IMR-90 (cell line): ENCODE measurements at regions of chr14 and their contacts with region 1.

Region 1: DNA sequence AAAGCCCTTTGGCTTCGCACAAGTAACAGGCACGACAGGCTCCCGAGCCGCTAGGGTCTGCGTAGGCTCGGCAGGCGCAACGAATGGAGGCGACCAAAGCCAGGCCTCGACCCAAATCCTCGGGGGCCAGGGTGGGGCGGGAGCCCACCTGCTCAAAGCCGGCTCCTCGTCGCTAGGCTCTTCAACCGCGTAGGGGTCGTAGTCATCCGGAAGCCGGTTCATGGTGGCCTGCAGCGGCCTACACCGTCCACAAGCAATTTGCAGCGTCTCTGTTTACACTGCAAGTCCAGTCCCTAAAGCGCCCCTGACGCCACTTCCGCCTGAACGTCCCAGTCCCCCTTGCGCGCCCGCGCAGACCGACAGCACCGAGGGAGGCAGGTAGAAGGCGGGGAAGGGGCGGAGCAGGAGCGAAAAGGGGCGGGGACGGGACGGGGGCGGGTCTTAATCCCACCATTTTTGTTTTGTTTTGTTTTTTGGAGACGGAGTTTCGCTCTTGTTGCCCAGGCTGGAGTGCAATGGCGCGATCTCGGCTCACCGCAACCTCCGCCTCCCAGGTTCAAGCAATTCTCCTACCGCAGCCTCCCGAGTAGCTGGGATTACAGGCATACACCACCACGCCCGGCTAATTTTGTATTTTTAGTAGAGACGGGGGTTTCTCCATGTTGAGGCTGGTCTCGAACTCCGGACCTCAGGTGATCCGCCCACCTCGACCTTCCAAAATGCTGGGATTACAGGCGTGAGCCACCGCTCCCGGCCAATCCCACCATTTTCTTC is at the start of gene EAPP:
- DNase-seq: peak; percentile 97
- ATAC-seq: peak; percentile 99
- H3K4me3 ChIP-seq: peak within 1 kb of the TSS; percentile 80
- H3K27ac ChIP-seq: peak within 1 kb of the TSS; percentile 94
- H3K4me1 ChIP-seq: peaks cover 5% of the 10 kb centered on the region
- H3K27me3 ChIP-seq: no peaks in the 10 kb centered on the region
- CTCF ChIP-seq: no peak
- POLR2A ChIP-seq: peak; percentile 94
- RAD21 ChIP-seq: peak; percentile 35
- total RNA-seq, gene EAPP: 32.3 and 53.6 TPM in 2 replicates

Region 2: GRCh38 chr14:34365309-34365915 is 174.2 kb before region 1 on chr14:
- CTCF ChIA-PET with region 1: no interaction called
- POLR2A ChIA-PET with region 1: no interaction called
- dilution Hi-C with region 1: no loop called
- in situ Hi-C with region 1: no loop called
- intact Hi-C with region 1: loop called (anchors 5 kb)
- DNase-seq: peak; percentile 13
- ATAC-seq: 0 out of 2 replicates have a peak, but pooled peaks have one; percentile 53
- H3K4me3 ChIP-seq: no peak overlapping the region
- H3K27ac ChIP-seq: no peak overlapping the region
- H3K4me1 ChIP-seq: peaks cover 9% of the 10 kb centered on the region; the same call in 1 of the 2 replicates
- H3K27me3 ChIP-seq: no peaks in the 10 kb centered on the region
- CTCF ChIP-seq: 0 out of 2 replicates have a peak, but pooled peaks have one; percentile 26
- POLR2A ChIP-seq: no peak
- RAD21 ChIP-seq: peak; percentile 23; the same call in 1 of the 2 replicates

Region 3: DNA sequence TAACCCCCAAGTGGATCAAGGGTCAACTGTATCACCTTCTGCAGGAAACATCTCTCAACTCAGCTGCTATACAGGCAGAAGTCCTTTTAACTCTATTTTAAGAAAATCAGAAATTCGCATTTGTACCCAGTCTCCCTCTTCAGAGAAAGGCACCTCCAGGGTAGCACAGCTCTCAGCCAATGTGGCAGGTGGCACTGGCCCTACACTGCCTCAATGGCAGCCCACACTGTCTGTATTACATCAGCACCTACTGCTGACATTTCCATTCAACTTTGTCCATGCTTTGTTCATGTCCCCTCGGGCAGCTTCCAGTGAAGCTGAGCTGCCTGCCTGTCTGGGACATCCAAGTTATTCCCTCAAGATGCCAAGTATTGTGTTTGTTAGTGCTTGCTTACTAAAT is 86.4 kb before region 1 on chr14:
- CTCF ChIA-PET with region 1: no interaction called
- POLR2A ChIA-PET with region 1: no interaction called
- dilution Hi-C with region 1: no loop called
- in situ Hi-C with region 1: loop called (anchors 10 kb)
- intact Hi-C with region 1: no loop called
- DNase-seq: no peak
- ATAC-seq: no peak
- H3K4me3 ChIP-seq: no peak overlapping the region
- H3K27ac ChIP-seq: no peak overlapping the region
- H3K4me1 ChIP-seq: peaks cover 2% of the 10 kb centered on the region; the same call in 1 of the 2 replicates
- H3K27me3 ChIP-seq: no peaks in the 10 kb centered on the region
- CTCF ChIP-seq: no peak
- POLR2A ChIP-seq: no peak
- RAD21 ChIP-seq: no peak

Region 4: DNA sequence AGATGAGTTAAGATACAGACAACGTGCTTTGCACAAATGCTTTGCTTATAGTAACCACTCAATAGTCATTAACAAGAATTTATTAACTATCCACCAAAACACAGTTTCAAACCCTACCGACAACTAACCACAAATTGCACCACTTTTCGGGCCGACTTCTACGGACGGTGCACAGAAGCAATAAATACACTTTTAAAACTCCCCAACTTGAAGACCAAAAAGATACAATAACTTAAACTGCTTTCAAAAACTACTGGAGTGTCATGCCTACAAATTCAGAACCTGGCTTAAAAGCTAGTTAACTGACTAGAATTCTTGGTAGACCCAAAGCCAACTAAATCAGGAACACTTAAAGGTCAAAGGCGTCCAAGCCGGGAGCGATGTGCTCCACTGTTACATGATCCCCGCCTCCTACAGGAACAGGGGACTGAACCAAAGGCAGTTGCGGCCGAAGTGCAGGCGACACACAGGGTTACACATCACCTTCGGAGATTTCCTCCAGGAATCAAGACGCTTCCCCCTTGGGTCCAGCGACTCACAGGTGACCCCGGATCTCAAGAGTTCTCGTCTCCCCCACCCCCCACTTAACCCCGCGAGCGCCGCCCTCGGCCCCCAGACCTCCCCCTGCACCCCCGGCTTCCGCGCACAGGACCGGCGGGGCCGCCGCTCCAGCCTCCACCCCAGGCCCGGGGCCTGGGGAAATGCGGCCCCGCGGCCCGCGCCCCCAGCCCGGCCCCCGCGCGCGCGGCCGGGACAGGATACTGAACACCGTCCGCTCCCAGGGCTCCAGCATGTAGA is 78.1 kb before region 1 on chr14:
- CTCF ChIA-PET with region 1: no interaction called
- POLR2A ChIA-PET with region 1: no interaction called
- dilution Hi-C with region 1: no loop called
- in situ Hi-C with region 1: loop called (anchors 10 kb)
- intact Hi-C with region 1: loop called (anchors 5 kb)
- DNase-seq: peak; percentile 52
- ATAC-seq: peak; percentile 36
- H3K4me3 ChIP-seq: peak overlapping the region; percentile 82
- H3K27ac ChIP-seq: peak overlapping the region; percentile 80
- H3K4me1 ChIP-seq: peaks cover 6% of the 10 kb centered on the region
- H3K27me3 ChIP-seq: no peaks in the 10 kb centered on the region
- CTCF ChIP-seq: no peak
- POLR2A ChIP-seq: no peak
- RAD21 ChIP-seq: no peak

Region 5: GRCh38 chr14:34496679-34497513 is 42.7 kb before region 1 on chr14:
- CTCF ChIA-PET with region 1: interaction called, 3 read pairs
- POLR2A ChIA-PET with region 1: no interaction called
- dilution Hi-C with region 1: no loop called
- in situ Hi-C with region 1: no loop called
- intact Hi-C with region 1: loop called (anchors 5 kb)
- DNase-seq: peak; percentile 100
- ATAC-seq: peak; percentile 96
- H3K4me3 ChIP-seq: no peak overlapping the region
- H3K27ac ChIP-seq: peak overlapping the region; percentile 98
- H3K4me1 ChIP-seq: peaks cover 12% of the 10 kb centered on the region
- H3K27me3 ChIP-seq: no peaks in the 10 kb centered on the region
- CTCF ChIP-seq: peak; percentile 38
- POLR2A ChIP-seq: peak; percentile 91
- RAD21 ChIP-seq: peak; percentile 49

Region 6: GRCh38 chr14:34693228-34693939 is 153.8 kb after region 1 on chr14:
- CTCF ChIA-PET with region 1: no interaction called
- POLR2A ChIA-PET with region 1: no interaction called
- dilution Hi-C with region 1: no loop called
- in situ Hi-C with region 1: no loop called
- intact Hi-C with region 1: no loop called
- DNase-seq: no peak
- ATAC-seq: no peak; the same call in 1 of the 2 replicates
- H3K4me3 ChIP-seq: no peak overlapping the region
- H3K27ac ChIP-seq: no peak overlapping the region
- H3K4me1 ChIP-seq: no peaks in the 10 kb centered on the region
- H3K27me3 ChIP-seq: no peaks in the 10 kb centered on the region
- CTCF ChIP-seq: no peak
- POLR2A ChIP-seq: no peak
- RAD21 ChIP-seq: no peak

Region 7: DNA sequence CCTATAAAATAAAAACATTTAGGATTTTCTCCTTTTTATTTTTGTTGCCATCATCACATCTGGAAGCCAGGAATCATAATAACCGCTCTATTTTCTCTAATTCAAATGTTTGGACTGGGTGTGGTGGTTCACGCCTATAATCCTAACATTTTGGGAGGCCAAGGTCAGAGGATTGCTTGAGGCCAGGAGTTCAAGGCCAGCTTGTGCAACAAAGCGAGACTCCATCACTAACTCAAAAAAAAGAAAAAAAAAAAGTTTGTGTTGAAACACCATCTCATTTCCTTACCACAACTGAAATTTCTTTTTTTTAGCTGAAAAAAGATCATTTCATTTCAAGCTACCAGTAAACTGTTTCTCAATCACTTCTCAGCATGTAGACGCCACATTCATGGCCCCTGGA is 344.4 kb after region 1 on chr14:
- CTCF ChIA-PET with region 1: no interaction called
- POLR2A ChIA-PET with region 1: no interaction called
- dilution Hi-C with region 1: no loop called
- in situ Hi-C with region 1: no loop called
- intact Hi-C with region 1: no loop called
- DNase-seq: no peak
- ATAC-seq: no peak
- H3K4me3 ChIP-seq: no peak overlapping the region
- H3K27ac ChIP-seq: no peak overlapping the region
- H3K4me1 ChIP-seq: no peaks in the 10 kb centered on the region
- H3K27me3 ChIP-seq: no peaks in the 10 kb centered on the region
- CTCF ChIP-seq: no peak
- POLR2A ChIP-seq: no peak
- RAD21 ChIP-seq: no peak